Aorta (tissue), 5 donors: ENCODE measurements at regions of chr12 and their contacts with region 1.

Region 1: GRCh38 chr12:113334786-113335540 is at the start of gene SLC8B1:
- DNase-seq: peak; percentile 92 to 96
- ATAC-seq: peak; percentile 99
- H3K4me3 ChIP-seq: peak within 1 kb of the TSS; percentile 65 to 77
- H3K27ac ChIP-seq: peak within 1 kb of the TSS in 1 of 2 donors; percentile 20
- H3K4me1 ChIP-seq: no peaks in the 10 kb centered on the region
- H3K27me3 ChIP-seq: no peaks in the 10 kb centered on the region
- total RNA-seq, gene SLC8B1: 32.8 to 48.6 TPM

Region 2: DNA sequence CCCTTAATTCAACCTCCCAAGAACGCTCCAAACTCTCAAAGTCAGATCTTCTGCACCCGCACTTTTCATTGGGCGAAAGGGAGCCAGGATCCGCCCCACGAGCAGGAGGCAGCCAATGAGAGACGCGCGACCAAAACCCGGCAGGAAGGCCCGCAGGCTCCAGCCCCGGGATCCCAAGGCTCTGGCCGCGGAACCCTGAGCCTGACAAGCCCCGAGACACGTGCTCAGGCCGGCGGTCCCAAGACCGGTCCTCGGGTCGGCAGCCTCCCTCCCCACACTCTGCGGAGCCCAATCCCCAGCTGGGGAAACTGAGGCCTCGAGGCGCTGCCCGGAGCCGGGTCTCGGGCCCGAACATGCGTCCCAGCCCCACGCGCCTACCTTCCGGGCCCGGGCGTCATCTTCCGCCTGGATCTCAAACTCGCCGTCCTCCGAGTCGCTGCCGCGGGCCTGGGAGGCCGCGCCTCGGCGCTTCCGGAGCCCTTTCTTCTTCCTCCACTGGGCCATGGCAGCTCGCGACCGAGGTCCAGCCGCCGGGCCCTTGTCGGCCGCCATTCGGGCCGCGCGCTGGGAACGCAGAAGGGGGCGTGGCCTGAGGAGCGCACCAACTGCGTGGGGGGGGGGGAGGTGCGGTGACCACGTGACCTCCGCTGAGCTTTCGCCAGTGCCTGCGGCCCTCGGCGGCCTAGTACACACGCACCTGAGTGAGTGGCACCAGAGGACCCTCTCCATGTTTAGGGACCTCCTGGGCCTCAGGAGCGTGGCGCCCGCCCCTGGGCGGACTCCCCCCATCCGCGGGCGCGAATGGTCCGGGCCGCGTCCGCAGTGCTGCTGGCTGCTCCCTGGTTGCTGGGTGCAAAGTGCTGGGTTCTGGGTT is 149.8 kb before region 1 on chr12 and contains the starts of genes DDX54 and RITA1:
- intact Hi-C with region 1: loop called in 1 of 2 experiments (anchors 5 kb)
- DNase-seq: peak; percentile 93 to 95
- ATAC-seq: peak; percentile 95
- H3K4me3 ChIP-seq: peak within 1 kb of the TSS; percentile 63 to 71
- H3K27ac ChIP-seq: peak within 1 kb of the TSS; percentile 47 to 79
- H3K4me1 ChIP-seq: peaks cover 2% of the 10 kb centered on the region in 2 donors
- H3K27me3 ChIP-seq: no peaks in the 10 kb centered on the region
- total RNA-seq, gene DDX54: 47.2 to 48.6 TPM
- total RNA-seq, gene RITA1: 6.1 to 10.0 TPM

Region 3: DNA sequence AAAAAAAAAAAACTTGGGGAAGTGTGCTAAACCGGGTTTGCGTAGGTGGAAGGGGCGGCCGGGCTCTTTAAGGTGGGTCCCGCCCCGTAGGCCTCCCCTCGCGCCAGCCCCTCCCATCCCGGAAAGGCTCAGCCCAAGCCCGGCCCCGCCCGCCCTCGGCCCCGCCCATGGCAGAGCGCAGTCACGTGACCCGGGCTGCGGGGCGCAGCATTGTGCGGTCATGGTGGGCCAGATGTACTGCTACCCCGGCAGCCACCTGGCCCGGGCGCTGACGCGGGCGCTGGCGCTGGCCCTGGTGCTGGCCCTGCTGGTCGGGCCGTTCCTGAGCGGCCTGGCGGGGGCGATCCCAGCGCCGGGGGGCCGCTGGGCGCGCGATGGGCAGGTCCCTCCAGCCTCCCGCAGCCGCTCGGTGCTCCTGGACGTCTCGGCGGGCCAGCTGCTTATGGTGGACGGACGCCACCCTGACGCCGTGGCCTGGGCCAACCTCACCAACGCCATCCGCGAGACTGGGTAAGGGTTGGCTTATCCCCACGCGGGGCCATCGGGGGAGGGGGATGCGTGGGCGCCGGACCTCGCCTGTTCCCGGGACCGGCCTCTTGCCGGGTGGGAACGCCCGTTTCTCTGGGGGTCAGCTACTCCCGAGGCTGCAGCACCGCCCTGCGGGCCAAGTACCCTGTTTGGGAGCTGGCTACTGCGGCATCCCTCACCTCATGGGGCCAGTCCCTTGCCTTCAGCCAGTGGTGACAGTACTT is 23.6 kb after region 1 on chr12 and contains the start of gene PLBD2:
- intact Hi-C with region 1: loop called in 1 of 2 experiments (anchors 2 kb)
- DNase-seq: peak; percentile 97 to 98
- ATAC-seq: peak; percentile 97
- H3K4me3 ChIP-seq: peak within 1 kb of the TSS; percentile 28 to 90
- H3K27ac ChIP-seq: peak within 1 kb of the TSS; percentile 3 to 75
- H3K4me1 ChIP-seq: no peaks in the 10 kb centered on the region
- H3K27me3 ChIP-seq: no peaks in the 10 kb centered on the region
- total RNA-seq, gene PLBD2: 60.6 to 76.1 TPM